Posterior cingulate gyrus (tissue), 11 donors: ENCODE measurements at regions of chr11 and their contacts with region 1.

Region 1: GRCh38 chr11:128290106-128290840 is 297.1 kb downstream of the ETS1 start:
- DNase-seq: peak in 9 of 10 donors; percentile 10 to 83 (median 34)

Region 2: DNA sequence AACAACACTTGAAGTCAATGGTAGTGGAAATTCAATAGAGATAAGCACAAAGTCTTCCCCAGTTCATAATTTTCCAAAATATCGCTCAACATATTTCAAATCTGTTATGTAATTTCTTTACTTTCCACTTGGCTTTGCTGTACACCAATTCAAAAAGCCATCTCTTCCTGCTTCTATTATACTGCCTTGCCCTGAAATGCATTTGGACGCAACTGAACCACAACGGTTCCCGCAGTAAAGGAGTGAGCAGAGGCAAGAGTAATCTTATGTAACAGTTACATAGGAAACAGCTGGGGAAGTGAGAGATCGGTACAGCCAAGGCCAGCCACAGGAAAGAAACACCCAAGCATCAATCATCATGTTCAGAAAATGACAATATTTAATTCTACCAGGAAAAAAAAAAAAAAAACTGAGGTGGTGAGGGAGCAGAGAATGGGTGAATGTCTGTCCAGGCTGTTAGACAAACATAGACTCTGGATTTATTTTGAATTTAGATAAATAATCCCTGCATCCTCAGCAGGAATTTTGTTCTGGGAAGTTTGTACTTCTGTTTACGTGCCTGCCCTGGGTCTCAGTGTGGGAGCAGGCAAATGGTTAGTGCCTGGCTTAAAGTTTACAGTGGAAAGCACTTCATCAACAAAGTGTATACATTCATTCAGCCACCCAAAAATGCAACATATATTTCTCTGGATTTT is 95.1 kb before region 1 on chr11:
- intact Hi-C with region 1: no loop called
- DNase-seq: no peak

Region 3: GRCh38 chr11:128222245-128222884 is 67.9 kb before region 1 on chr11:
- intact Hi-C with region 1: no loop called
- DNase-seq: no peak

Region 4: GRCh38 chr11:128394431-128395089 is 104.3 kb after region 1 on chr11:
- intact Hi-C with region 1: no loop called
- DNase-seq: no peak

Region 5: GRCh38 chr11:128553662-128554362 is 263.5 kb after region 1 on chr11:
- intact Hi-C with region 1: loop called (anchors 2 kb)
- DNase-seq: peak in 2 of 10 donors; percentile 30 to 62

Region 6: GRCh38 chr11:128630367-128631230 is 340.3 kb after region 1 on chr11:
- intact Hi-C with region 1: loop called (anchors 2 kb)
- DNase-seq: peak; percentile 62 to 96 (median 85)